HEK293T (cell line): ENCODE measurements at regions of chr2 and their contacts with region 1.

Region 1: GRCh38 chr2:197434541-197435513 is at the start of gene SF3B1:
- DNase-seq: peak; percentile 95

Region 2: DNA sequence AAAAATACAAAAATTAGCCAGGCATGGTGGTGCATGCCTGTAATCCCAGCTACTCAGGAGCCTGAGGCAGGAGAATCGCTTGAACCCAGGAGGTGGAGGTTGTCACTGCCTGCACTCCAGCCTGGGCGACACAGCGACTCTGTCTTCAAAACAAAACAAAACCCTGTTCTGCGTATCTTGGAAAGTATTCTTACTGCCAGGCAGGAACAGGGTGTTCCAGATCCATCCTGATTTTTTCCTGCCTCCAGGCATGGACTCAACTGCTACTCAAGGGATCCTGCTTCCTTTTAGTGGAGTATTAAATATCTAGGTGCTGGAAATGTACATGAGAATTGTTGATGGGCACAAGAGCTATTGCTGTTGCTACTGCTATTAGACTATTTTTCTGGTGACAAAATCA is 52.6 kb after region 1 on chr2:
- CTCF ChIA-PET with region 1: no interaction called
- POLR2A ChIA-PET with region 1: interaction called, 12 read pairs
- DNase-seq: no peak